ENCODE measurements at regions of chr19 and their contacts with region 1.

Region 1: DNA sequence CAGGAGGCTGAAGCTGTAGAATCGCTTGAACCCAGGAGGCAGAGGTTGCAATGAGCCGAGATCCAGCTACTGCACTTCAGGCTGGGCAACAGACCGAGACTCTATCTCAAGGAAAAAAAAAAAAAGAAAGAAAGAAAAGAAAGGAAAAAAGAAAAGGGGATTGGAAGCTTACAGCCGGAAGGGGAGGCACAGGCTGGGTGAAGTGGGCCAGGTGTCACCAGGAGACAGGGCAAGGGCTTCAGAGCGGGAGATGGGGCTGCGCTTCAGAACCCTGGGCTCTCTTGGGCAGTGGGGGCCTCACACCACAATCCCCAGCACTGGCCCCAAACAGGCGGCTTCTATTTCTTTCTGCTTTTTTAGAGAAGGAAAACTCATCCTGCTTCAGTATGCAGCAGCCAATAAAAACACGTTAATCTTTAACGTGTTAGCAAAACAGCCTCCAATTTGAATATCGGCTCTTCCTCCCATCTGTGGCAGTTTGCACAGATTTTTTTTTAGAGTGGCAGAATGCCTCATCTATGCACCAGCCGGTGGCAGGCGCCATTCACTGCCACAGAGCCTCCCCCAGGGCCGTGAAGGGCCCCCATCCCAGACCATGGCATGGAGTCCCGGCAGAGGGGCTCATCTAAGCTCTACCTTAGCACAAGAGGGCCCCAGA is 46.6 kb upstream of the C19orf12 start:
- DNase-seq: no peak
- H3K4me3 Mint-ChIP-seq: no peak overlapping the region
- H3K27ac Mint-ChIP-seq: no peak overlapping the region
- H3K4me1 Mint-ChIP-seq: peaks cover 3% of the 10 kb centered on the region
- H3K27me3 Mint-ChIP-seq: peaks cover 35% of the 10 kb centered on the region

Region 2: DNA sequence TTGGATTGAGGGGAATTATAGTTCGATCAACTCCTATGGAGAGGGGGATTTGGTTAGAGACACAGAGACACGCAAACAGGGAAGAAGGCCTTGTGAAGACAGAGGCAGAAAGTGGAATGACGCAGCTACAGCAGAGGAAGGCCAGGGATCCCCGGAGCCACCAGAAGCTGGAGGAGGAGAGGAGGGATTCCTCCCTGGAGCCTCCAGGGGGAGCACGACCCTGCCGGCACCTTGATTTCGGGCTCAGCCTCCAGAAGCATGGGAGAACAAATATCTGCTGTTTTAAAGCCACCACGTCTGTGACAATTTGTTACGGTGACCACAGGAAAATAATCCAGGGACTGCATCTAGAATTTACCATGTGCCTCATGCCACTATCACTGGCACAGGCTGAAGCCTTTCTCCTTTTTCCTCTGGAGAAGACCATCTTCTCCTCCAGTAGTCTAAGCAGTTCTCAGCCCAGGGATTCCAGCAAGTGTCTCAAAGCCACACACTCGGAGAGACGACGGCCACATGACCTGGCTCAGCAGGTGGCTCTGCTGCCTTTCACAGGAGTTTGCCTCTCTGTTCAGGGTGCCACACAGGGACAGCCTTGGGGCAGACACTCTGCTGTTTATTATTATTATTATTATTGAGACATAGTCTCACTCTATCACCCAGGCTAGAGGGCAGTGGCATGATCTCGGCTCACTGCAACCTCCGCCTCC is 10.2 kb after region 1 on chr19:
- CTCF ChIA-PET with region 1: interaction called, 39 read pairs
- DNase-seq: peak; percentile 55
- H3K4me3 Mint-ChIP-seq: no peak overlapping the region
- H3K27ac Mint-ChIP-seq: no peak overlapping the region
- H3K4me1 Mint-ChIP-seq: peaks cover 15% of the 10 kb centered on the region
- H3K27me3 Mint-ChIP-seq: peaks cover 10% of the 10 kb centered on the region

Region 3: DNA sequence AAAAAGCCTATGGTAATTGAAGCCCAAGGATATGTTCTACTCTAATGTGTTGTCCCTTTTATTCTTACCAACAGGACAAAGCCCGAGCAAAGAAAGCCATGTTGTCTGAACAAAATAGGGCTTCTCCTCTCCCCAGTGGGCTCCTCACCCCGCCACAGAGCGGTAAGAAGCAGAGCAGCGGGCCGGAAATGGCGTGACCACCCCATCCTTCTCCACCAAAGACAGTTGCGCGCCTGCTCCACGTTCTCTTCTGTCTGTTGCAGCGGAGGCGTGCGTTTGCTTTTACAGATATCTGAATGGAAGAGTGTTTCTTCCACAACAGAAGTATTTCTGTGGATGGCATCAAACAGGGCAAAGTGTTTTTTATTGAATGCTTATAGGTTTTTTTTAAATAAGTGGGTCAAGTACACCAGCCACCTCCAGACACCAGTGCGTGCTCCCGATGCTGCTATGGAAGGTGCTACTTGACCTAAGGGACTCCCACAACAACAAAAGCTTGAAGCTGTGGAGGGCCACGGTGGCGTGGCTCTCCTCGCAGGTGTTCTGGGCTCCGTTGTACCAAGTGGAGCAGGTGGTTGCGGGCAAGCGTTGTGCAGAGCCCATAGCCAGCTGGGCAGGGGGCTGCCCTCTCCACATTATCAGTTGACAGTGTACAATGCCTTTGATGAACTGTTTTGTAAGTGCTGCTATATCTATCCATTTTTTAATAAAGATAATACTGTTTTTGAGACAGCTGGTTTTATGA is 62.0 kb after region 1 on chr19:
- CTCF ChIA-PET with region 1: no interaction called
- DNase-seq: no peak
- H3K4me3 Mint-ChIP-seq: no peak overlapping the region
- H3K27ac Mint-ChIP-seq: peak overlapping the region; percentile 26
- H3K4me1 Mint-ChIP-seq: peaks cover 3% of the 10 kb centered on the region
- H3K27me3 Mint-ChIP-seq: no peaks in the 10 kb centered on the region

Region 4: DNA sequence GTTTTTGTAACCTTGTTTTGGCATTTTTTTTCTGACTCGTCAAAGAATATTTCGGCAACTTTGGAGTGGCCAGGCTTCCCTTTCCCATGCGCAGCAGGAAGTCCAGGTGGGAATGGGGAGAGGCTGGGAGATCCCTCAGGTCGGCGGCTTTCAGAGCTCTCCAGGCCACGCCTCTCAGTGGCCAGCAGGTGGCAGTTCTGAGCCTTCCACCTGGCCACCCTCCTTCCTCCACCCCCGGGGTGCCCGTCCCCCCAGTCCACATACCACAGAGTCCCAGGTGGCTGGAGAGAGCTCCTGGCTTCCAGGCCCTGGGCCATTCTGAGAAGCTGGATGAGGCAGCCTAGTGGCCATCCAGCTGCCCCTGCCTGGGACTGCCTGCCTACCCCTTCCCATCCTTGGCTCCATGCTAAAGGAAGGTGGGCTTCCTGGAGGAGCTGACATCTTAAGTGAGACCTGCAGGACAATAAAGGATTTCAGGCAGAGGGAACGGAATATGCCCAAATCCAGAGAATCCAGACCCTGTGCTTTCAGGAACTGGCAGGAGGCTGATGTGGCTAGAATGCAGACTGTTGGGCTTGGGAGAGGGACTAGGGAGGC is 96.4 kb after region 1 on chr19:
- CTCF ChIA-PET with region 1: interaction called, 11 read pairs
- DNase-seq: peak; percentile 60
- H3K4me3 Mint-ChIP-seq: no peak overlapping the region
- H3K27ac Mint-ChIP-seq: no peak overlapping the region
- H3K4me1 Mint-ChIP-seq: no peaks in the 10 kb centered on the region
- H3K27me3 Mint-ChIP-seq: peaks cover 36% of the 10 kb centered on the region